ENCODE measurements at regions of chr16 and their contacts with region 1.

Region 1: DNA sequence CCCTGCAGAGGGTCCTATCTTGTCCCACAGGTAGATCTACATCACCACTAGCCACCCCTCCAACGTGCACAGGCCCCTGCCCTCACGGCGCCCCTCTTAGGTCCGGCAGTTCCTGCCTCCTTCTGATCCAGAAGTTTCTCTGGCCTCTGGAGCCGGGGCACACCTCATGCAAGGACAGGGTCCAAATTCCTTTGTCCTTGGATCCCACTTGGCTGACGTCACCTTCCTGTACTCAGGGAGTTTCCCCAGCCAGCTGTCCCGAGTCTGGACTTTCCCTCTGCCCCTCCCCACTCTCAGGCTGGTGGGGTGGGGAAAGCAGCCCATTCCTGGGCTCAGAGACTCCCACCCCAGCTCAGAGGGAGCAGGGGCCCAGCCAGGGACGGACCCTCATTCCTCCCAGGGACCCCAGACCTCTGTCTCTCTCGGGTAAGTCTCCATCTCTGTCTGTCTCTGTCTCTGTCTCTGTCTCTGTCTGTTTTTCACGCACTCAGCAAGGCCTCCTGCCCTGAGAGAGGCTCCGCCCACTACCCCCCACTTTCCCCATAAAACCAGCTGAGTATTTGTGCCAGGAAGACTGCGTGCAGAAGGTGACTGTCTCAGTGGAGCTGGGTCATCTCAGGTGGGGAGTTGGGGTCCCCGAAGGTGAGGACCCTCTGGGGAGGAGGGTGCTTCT is at the start of gene IL32:
- DNase-seq: peak; percentile 77 to 85 (median 80)
- ATAC-seq: peak; percentile 81 to 85
- H3K4me3 ChIP-seq: peak within 1 kb of the TSS; percentile 48
- H3K27ac ChIP-seq: peak within 1 kb of the TSS; percentile 78
- H3K4me1 ChIP-seq: no peaks in the 10 kb centered on the region
- H3K27me3 ChIP-seq: no peaks in the 10 kb centered on the region
- total RNA-seq, gene IL32: 27.5 to 55.0 (median 37.8) TPM

Region 2: DNA sequence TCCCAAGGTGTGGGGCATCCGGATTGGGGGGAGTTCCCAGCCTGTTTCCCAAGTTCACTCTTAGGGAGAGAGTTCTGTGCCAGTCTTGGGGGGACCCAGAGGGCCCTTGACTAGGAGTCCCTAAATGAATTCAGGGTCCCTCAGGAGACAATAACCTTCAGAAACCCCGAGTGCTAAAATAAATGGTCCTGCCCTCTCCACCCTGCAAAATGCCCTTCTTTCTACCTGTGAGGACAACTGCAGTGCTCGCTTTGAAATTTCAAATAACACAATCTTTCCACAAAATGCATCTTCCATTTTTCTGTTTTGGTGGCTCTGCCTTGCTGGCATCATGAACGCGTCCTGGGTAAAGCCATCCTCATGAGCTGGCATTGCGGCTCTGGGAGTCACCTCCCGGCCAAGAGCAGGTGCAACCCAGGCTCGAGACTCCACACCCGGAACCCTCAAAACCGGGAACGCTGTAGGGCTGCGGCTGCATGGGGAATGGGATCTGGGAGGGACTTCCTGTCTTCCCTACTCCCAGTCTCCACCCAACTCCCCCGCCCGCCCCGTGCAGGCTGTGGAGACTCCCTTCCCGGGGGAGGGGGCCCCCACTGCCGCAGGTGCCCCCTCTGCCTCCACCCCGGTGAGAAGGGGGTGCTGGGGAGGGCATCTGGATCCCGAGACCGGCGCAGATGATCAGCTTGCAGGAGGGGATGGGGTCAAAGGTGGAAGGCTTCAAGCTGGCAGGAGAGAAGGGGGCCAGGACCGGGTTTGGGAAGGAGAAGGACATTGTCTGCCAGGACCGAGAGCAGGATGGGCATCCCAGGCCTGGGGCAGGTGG is 47.1 kb after region 1 on chr16 and contains the start of gene ZNF205:
- intact Hi-C with region 1: loop called in 1 of 4 experiments (anchors 10 kb)
- DNase-seq: peak; percentile 78 to 91 (median 90)
- ATAC-seq: peak; percentile 92
- H3K4me3 ChIP-seq: peak within 1 kb of the TSS; percentile 91
- H3K27ac ChIP-seq: peak within 1 kb of the TSS; percentile 53
- H3K4me1 ChIP-seq: no peaks in the 10 kb centered on the region
- H3K27me3 ChIP-seq: no peaks in the 10 kb centered on the region
- total RNA-seq, gene ZNF205: 6.4 to 10.1 (median 9.2) TPM

Region 3: DNA sequence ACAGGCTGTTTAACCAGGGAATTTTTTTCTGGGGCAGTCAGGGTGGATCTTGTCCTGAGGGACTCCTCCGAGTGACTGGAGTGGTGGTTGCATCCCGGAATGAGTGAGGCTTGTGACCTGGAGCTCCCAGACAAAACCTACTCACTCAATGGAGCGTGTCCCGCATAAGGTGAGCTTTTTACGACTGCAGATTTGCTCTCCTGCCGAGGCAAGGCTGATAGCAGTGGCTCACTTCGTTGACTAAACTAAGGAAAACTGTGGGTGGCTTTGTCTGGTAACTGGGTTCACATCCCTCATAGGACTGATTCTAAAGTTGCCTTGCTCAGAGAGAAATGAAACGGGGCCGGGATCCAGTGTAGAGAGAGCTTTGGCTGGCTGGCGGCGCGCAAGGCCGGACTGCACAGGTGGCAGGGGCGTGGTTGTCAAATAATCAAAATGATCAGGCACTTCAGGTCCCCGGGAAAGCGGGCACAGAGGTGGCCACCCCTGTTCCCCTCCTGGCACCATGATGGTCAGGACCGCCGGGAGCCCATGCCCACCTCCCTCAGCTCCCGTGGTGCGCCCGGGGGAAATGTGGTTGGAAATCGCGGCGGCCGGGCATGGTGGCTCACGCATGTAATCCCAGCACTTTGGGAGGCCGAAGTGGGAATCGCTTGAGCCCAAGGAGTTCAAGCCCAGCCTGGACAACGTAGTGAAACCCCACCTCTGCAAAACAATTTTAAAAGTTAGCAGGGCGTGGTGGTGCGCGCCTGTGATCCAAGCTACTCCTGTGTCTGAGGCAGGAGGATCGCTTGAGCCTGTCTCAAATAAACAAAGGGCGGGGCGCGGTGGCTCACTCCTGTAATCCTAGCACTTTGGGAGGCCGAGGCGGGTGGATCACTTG is 96.2 kb after region 1 on chr16:
- intact Hi-C with region 1: loop called in 1 of 4 experiments (anchors 10 kb)
- DNase-seq: peak in 1 of 3 donors; percentile 57
- ATAC-seq: no peak
- H3K4me3 ChIP-seq: no peak overlapping the region
- H3K27ac ChIP-seq: no peak overlapping the region
- H3K4me1 ChIP-seq: no peaks in the 10 kb centered on the region
- H3K27me3 ChIP-seq: no peaks in the 10 kb centered on the region

Region 4: DNA sequence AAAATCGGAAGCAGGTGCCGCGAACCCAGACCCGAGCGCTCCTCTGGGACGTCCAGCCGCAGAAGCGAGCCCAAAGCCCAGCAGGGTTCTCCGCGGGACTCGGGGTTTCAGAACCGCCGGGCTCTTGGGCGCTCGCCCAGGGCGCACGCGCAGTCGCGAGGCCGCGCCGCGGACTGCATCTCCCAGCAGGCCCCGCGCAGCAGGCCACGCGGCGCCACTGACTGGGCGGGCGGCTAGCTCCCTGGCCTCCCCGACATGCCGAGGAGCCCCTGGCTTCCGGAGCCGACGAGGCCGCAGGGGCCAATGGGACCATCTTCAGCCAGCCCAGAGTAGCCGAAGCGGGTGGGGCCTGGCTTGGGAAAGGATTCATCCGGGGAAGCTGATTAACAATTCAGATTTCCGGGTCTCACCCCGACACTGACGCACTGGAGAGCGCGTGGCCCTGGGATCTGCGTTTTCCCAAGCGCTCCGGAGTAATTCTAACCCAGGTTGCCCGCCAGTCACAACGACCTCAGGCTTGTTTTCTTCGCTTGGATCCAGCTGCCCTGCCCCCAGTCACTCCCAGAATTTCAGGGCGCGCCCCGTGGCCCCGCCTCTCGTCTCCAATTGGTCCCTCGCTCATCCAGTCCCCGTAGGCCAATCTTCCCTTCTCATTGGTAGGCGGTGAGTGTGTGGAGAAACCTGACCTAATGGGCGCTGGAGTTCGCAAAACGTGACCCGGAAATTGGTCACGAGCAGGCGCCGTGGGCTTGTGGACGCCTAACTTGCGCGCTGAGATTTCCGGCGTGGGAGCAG is 217.7 kb after region 1 on chr16 and contains the start of gene ZNF263:
- intact Hi-C with region 1: no loop called
- DNase-seq: peak; percentile 96 to 98 (median 98)
- ATAC-seq: peak; percentile 97 to 98
- H3K4me3 ChIP-seq: peak within 1 kb of the TSS; percentile 92
- H3K27ac ChIP-seq: peak within 1 kb of the TSS; percentile 100
- H3K4me1 ChIP-seq: no peaks in the 10 kb centered on the region
- H3K27me3 ChIP-seq: no peaks in the 10 kb centered on the region
- total RNA-seq, gene ZNF263: 10.5 to 17.8 (median 12.0) TPM

Measured in right cardiac atrium (tissue), 5 donors.